HepG2 (cell line): ENCODE measurements at regions of chr18 and their contacts with region 1.

Region 1: DNA sequence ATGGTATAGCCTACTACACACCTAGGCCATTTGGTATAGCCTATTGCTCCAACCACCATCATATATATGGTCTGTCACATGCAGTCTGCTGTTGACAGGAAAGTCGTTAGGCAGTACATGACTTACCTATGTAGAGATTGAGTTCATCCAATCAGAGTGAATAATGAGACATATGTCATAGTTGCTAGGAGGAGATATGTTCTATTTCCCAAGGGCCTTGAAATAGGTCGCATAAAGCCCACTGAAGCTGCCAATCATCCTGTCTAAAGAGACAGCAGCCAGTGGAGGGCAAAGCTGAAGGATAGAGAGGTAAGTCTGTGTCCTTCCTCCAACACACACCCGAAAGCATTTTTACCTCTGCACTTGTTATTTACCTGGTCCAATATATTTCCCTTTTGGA is 263.4 kb downstream of the PTPRM start:
- DNase-seq: no peak
- ATAC-seq: peak; percentile 38; the same call in 1 of the 3 replicates
- H3K4me3 ChIP-seq: no peak overlapping the region
- H3K27ac ChIP-seq: no peak overlapping the region
- H3K4me1 ChIP-seq: no peaks in the 10 kb centered on the region
- H3K27me3 ChIP-seq: no peaks in the 10 kb centered on the region
- CTCF ChIP-seq: no peak
- EP300 ChIP-seq: no peak
- POLR2A ChIP-seq: no peak
- RAD21 ChIP-seq: no peak

Region 2: GRCh38 chr18:7557973-7558372 is 272.5 kb before region 1 on chr18:
- CTCF ChIA-PET with region 1: no interaction called
- POLR2A ChIA-PET with region 1: no interaction called
- in situ Hi-C with region 1: no loop called
- intact Hi-C with region 1: no loop called
- DNase-seq: no peak
- ATAC-seq: no peak
- H3K4me3 ChIP-seq: no peak overlapping the region
- H3K27ac ChIP-seq: no peak overlapping the region
- H3K4me1 ChIP-seq: peaks cover 24% of the 10 kb centered on the region
- H3K27me3 ChIP-seq: no peaks in the 10 kb centered on the region
- CTCF ChIP-seq: no peak
- EP300 ChIP-seq: no peak
- POLR2A ChIP-seq: no peak
- RAD21 ChIP-seq: no peak

Region 3: DNA sequence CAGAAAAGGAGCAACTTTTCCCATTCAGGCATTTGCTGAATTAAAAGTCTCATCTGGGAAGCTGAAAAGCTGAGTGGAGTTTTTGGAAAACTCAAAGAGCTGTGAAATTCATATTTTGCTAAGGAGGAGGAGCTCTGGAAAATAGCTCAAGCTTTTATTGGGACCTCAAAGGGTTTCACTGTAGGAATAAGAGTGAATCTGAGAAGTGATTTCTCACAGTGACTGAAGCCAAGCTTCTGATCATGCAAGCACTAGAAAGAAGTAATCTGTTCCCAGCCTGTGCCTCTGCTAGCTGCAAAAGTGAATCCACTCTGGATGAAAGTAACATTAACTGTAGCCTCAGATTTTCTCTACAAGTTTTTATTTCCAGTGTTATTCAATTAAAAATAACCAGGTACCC is 20.0 kb after region 1 on chr18:
- CTCF ChIA-PET with region 1: no interaction called
- POLR2A ChIA-PET with region 1: no interaction called
- in situ Hi-C with region 1: no loop called
- intact Hi-C with region 1: loop called (anchors 2 kb)
- DNase-seq: no peak
- ATAC-seq: no peak
- H3K4me3 ChIP-seq: no peak overlapping the region
- H3K27ac ChIP-seq: no peak overlapping the region
- H3K4me1 ChIP-seq: no peaks in the 10 kb centered on the region
- H3K27me3 ChIP-seq: no peaks in the 10 kb centered on the region
- CTCF ChIP-seq: no peak
- EP300 ChIP-seq: no peak
- POLR2A ChIP-seq: no peak
- RAD21 ChIP-seq: no peak

Region 4: GRCh38 chr18:7896805-7897518 is 66.5 kb after region 1 on chr18:
- CTCF ChIA-PET with region 1: no interaction called
- POLR2A ChIA-PET with region 1: no interaction called
- in situ Hi-C with region 1: no loop called
- intact Hi-C with region 1: loop called (anchors 10 kb)
- DNase-seq: no peak
- ATAC-seq: no peak
- H3K4me3 ChIP-seq: no peak overlapping the region
- H3K27ac ChIP-seq: no peak overlapping the region
- H3K4me1 ChIP-seq: no peaks in the 10 kb centered on the region
- H3K27me3 ChIP-seq: no peaks in the 10 kb centered on the region
- CTCF ChIP-seq: no peak
- EP300 ChIP-seq: no peak
- POLR2A ChIP-seq: no peak
- RAD21 ChIP-seq: no peak